HepG2 (cell line): ENCODE measurements at regions of chr4 and their contacts with region 1.

Region 1: DNA sequence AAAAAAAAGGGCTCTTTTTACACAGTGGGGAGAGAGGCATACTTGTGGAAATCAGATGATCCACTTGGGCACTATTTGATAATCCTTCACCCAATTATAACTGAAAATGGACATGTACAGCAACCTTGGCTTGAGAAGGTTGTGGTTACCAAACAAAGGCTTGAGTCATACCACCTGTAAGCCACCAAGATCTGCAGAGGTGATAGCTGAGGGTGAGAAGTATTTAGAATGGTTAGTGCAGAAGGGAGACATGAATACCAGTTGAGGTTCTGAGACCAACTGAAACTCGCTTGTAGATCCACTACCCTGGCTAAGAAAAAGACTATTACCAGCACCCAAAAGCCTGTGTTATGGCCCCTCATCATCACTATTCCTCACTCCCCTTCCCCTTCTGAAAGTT is 614.0 kb downstream of the STIM2 start:
- DNase-seq: no peak
- ATAC-seq: no peak
- H3K4me3 ChIP-seq: no peak overlapping the region
- H3K27ac ChIP-seq: no peak overlapping the region
- H3K4me1 ChIP-seq: no peaks in the 10 kb centered on the region
- H3K27me3 ChIP-seq: no peaks in the 10 kb centered on the region
- CTCF ChIP-seq: no peak
- EP300 ChIP-seq: no peak
- POLR2A ChIP-seq: no peak
- RAD21 ChIP-seq: no peak

Region 2: DNA sequence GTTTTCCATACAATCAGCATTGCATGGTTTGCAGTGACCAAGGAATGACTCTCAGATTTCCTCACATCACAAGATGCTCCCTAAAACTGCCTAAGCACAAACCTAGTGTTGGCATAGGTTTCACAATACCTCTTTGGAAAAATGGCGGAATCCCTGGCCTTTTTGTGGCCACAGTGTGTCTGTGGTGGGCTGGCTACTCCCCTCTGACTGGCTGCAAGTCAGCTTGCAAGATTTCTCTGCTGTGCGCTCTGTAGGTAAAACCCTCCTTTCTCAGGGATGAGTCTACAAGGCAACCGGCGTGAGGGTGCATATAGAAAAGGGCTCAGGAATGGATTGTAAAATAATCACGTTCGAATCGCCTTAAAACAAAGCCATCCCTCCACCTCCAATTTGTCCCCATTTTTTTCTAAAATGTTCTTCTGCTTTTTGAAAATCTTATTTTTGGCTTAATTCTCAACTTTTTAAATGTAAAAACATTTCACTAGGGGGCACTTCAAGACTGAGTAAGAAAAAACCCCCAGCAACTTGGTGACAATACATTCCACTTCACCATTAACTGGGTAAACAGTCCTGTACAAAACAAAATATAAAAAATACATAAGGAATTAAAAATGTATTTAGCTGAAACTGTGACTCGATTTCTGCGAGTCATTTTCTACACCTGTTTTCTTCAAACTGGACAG is 378.4 kb before region 1 on chr4:
- CTCF ChIA-PET with region 1: no interaction called
- POLR2A ChIA-PET with region 1: no interaction called
- in situ Hi-C with region 1: no loop called
- intact Hi-C with region 1: no loop called
- DNase-seq: no peak
- ATAC-seq: no peak
- H3K4me3 ChIP-seq: no peak overlapping the region
- H3K27ac ChIP-seq: no peak overlapping the region
- H3K4me1 ChIP-seq: no peaks in the 10 kb centered on the region
- H3K27me3 ChIP-seq: peaks cover 2 to 14% of the 10 kb centered on the region in 2 experiments; a peak in 2 of 5 replicates
- CTCF ChIP-seq: no peak
- EP300 ChIP-seq: no peak
- POLR2A ChIP-seq: no peak
- RAD21 ChIP-seq: no peak

Region 3: GRCh38 chr4:27412613-27413012 is 62.1 kb before region 1 on chr4:
- CTCF ChIA-PET with region 1: no interaction called
- POLR2A ChIA-PET with region 1: no interaction called
- in situ Hi-C with region 1: no loop called
- intact Hi-C with region 1: no loop called
- DNase-seq: no peak
- ATAC-seq: no peak
- H3K4me3 ChIP-seq: no peak overlapping the region
- H3K27ac ChIP-seq: no peak overlapping the region
- H3K4me1 ChIP-seq: no peaks in the 10 kb centered on the region
- H3K27me3 ChIP-seq: no peaks in the 10 kb centered on the region; a peak in 1 of 5 replicates
- CTCF ChIP-seq: no peak
- EP300 ChIP-seq: no peak
- POLR2A ChIP-seq: no peak
- RAD21 ChIP-seq: no peak

Region 4: GRCh38 chr4:27490315-27490714 is 15.6 kb after region 1 on chr4:
- CTCF ChIA-PET with region 1: no interaction called
- POLR2A ChIA-PET with region 1: no interaction called
- in situ Hi-C with region 1: no loop called
- intact Hi-C with region 1: loop called (anchors 1 kb)
- DNase-seq: no peak
- ATAC-seq: no peak
- H3K4me3 ChIP-seq: no peak overlapping the region
- H3K27ac ChIP-seq: no peak overlapping the region
- H3K4me1 ChIP-seq: no peaks in the 10 kb centered on the region
- H3K27me3 ChIP-seq: no peaks in the 10 kb centered on the region
- CTCF ChIP-seq: no peak
- EP300 ChIP-seq: no peak
- POLR2A ChIP-seq: no peak
- RAD21 ChIP-seq: no peak